HCT116 (cell line): ENCODE measurements at regions of chr16 and their contacts with region 1.

Region 1: DNA sequence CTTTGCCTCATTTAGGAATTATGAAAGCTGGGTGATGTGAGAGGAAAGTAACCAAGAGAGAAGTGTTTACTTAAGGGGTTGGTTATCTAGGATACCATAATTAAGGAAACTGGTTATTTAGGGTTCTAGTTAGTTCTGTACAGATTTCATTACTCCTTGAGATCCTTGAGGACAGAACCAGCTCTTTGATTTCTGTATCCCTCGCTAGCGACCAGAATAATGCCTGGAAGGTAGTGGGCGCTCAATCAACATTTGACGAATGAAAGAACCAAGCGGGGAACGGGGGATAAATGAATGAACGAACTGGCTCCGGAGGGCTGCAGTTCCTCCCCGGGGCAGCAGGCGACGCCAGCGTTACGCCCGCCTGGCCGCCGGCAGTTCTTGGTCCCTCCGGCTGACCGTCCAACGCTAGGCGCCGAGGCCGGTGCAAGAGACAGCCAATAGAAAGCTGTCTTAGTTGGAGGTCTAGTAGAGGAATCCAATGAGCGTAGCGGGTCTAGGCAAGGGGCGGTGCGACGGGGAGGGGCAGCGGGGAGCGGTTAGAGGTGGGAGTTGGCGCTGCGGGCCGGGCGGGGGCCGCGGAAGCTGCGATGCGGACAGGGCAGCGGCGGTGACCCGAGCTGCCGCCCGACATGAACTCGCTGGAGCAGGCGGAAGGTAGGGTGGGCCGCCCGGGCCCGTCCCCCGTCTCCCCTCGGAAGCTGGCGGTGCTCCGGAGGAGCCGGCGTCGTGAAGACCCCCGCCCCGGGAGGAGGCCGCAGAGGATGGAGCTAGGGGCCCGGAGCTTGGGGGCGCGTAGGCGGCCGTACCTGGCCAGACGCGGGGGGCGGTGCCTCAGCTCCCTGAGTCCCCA is at the start of gene CNEP1R1:
- DNase-seq: peak; percentile 96
- ATAC-seq: peak; percentile 91
- H3K4me3 ChIP-seq: peak within 1 kb of the TSS; percentile 94 to 97
- H3K27ac ChIP-seq: peak within 1 kb of the TSS; percentile 45
- H3K4me1 ChIP-seq: peaks cover 4 to 15% of the 10 kb centered on the region in 2 experiments; a peak in 2 of 4 replicates
- H3K27me3 ChIP-seq: no peaks in the 10 kb centered on the region
- CTCF ChIP-seq: peak; percentile 96 to 99 (median 99)
- POLR2A ChIP-seq: peak; percentile 52
- RAD21 ChIP-seq: peak; percentile 93
- total RNA-seq, gene CNEP1R1: 14.6 TPM

Region 2: GRCh38 chr16:49958448-49958847 is 66.5 kb before region 1 on chr16:
- CTCF ChIA-PET with region 1: interaction called, 12 read pairs
- POLR2A ChIA-PET with region 1: no interaction called
- RAD21 ChIA-PET with region 1: interaction called in 1 of 2 experiments, 4 read pairs
- intact Hi-C with region 1: no loop called
- DNase-seq: no peak
- ATAC-seq: no peak
- H3K4me3 ChIP-seq: no peak overlapping the region
- H3K27ac ChIP-seq: no peak overlapping the region
- H3K4me1 ChIP-seq: peaks cover 0 to 4% of the 10 kb centered on the region in 2 experiments; a peak in 2 of 4 replicates
- H3K27me3 ChIP-seq: no peaks in the 10 kb centered on the region
- CTCF ChIP-seq: no peak
- POLR2A ChIP-seq: no peak
- RAD21 ChIP-seq: no peak

Region 3: GRCh38 chr16:50035468-50035992 is 10.6 kb after region 1 on chr16:
- CTCF ChIA-PET with region 1: interaction called, 11 read pairs
- POLR2A ChIA-PET with region 1: no interaction called
- RAD21 ChIA-PET with region 1: no interaction called
- intact Hi-C with region 1: no loop called
- DNase-seq: no peak
- ATAC-seq: no peak
- H3K4me3 ChIP-seq: no peak overlapping the region
- H3K27ac ChIP-seq: no peak overlapping the region
- H3K4me1 ChIP-seq: no peaks in the 10 kb centered on the region
- H3K27me3 ChIP-seq: no peaks in the 10 kb centered on the region
- CTCF ChIP-seq: no peak
- POLR2A ChIP-seq: no peak
- RAD21 ChIP-seq: no peak

Region 4: GRCh38 chr16:50065624-50066481 is 40.9 kb after region 1 on chr16 and contains the start of gene HEATR3:
- CTCF ChIA-PET with region 1: interaction called, 14 read pairs
- POLR2A ChIA-PET with region 1: interaction called, 3 read pairs
- RAD21 ChIA-PET with region 1: no interaction called
- intact Hi-C with region 1: no loop called
- DNase-seq: peak; percentile 87
- ATAC-seq: peak; percentile 92
- H3K4me3 ChIP-seq: peak within 1 kb of the TSS; percentile 79 to 81
- H3K27ac ChIP-seq: peak within 1 kb of the TSS; percentile 84
- H3K4me1 ChIP-seq: peaks cover 0 to 14% of the 10 kb centered on the region in 2 experiments; a peak in 2 of 4 replicates
- H3K27me3 ChIP-seq: no peaks in the 10 kb centered on the region
- CTCF ChIP-seq: no peak
- POLR2A ChIP-seq: peak; percentile 70
- RAD21 ChIP-seq: no peak
- total RNA-seq, gene HEATR3: 16.3 TPM

Region 5: DNA sequence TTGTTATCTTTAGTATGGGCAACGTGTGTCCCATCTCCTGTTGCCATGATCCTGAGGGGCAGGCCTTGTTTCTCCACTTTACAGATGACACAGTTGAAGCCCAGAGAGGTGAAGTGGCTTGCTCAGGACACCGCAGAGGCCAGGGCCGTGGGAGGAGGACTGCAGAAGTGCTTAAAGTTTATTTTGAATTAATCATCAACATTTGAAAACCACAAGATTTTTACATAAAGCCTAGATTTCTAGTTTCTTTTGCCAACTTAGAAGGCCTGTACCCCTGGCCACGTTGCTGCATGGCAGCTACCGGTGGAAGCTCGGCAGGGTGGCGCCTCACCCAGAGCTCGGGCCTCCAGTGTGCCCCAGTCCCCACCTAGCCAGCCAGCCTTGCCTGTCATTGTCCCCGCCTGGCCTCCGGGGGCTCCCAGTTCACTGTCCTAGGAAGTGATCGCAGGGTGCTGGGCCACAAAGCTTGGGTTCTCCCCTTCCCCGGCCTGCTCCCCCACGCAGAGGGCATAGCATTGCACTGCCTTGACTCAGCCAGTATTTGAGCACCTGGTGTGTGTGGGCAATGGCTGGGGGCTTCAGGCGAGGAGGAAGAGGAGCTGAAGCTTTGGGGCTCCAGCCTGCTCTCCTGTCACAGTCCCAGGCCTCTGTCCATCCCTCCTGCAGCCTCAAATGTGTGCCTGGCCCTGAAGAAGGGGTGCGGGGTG is 226.6 kb after region 1 on chr16:
- CTCF ChIA-PET with region 1: no interaction called
- POLR2A ChIA-PET with region 1: no interaction called
- RAD21 ChIA-PET with region 1: no interaction called
- intact Hi-C with region 1: no loop called
- DNase-seq: no peak
- ATAC-seq: peak; percentile 60
- H3K4me3 ChIP-seq: no peak overlapping the region
- H3K27ac ChIP-seq: no peak overlapping the region
- H3K4me1 ChIP-seq: peaks cover 2 to 10% of the 10 kb centered on the region in 2 experiments; a peak in 2 of 4 replicates
- H3K27me3 ChIP-seq: no peaks in the 10 kb centered on the region
- CTCF ChIP-seq: no peak
- POLR2A ChIP-seq: no peak
- RAD21 ChIP-seq: no peak

Region 6: GRCh38 chr16:50354629-50355456 is 329.9 kb after region 1 on chr16:
- CTCF ChIA-PET with region 1: interaction called, 5 read pairs
- POLR2A ChIA-PET with region 1: no interaction called
- RAD21 ChIA-PET with region 1: no interaction called
- intact Hi-C with region 1: loop called (anchors 10 kb)
- DNase-seq: no peak
- ATAC-seq: no peak
- H3K4me3 ChIP-seq: no peak overlapping the region
- H3K27ac ChIP-seq: no peak overlapping the region
- H3K4me1 ChIP-seq: no peaks in the 10 kb centered on the region
- H3K27me3 ChIP-seq: no peaks in the 10 kb centered on the region
- CTCF ChIP-seq: peak; percentile 38 to 69 (median 51); a peak in 5 of 6 replicates
- POLR2A ChIP-seq: no peak
- RAD21 ChIP-seq: peak; percentile 34; the same call in 1 of the 2 replicates